Activated CD4-positive, alpha-beta memory T cell treated with anti-CD3 and anti-CD28 coated beads for 36 hours (primary cell): ENCODE measurements at regions of chrX and their contacts with region 1.

Region 1: DNA sequence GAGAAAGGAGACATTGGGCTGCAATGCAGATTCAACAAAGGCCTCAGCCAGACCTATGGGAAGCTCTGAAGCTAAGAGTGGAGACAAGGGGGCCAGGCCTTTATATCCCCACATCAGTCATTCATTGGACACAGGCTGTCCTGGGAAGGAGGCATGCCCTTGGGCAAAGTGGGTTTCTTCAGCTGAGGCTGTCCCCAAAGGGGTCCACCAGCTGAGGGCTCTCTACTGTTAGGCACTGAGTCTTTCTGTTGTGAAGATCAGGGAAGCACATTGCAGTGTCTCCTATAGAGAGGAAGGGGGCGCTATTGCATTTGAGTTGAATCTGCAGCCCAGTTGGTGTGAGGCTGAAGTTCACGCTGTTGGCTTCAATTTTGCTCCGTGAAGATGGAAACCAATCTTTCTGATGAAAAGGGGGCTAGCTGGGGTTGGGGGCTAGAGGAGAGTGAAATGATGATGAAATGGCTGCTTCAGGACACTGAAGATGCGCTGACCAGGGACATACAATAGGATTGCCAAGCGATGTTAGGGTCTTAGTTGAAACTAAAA is 48.0 kb downstream of the SLC25A5 start:
- DNase-seq: peak; percentile 27
- H3K4me3 Mint-ChIP-seq: no peak overlapping the region
- H3K27ac Mint-ChIP-seq: no peak overlapping the region
- H3K4me1 Mint-ChIP-seq: peaks cover 2% of the 10 kb centered on the region
- H3K27me3 Mint-ChIP-seq: no peaks in the 10 kb centered on the region

Region 2: GRCh38 chrX:119055687-119056086 is 460.5 kb before region 1 on chrX:
- CTCF ChIA-PET with region 1: no interaction called
- POLR2A ChIA-PET with region 1: no interaction called
- intact Hi-C with region 1: no loop called
- DNase-seq: no peak
- H3K4me3 Mint-ChIP-seq: no peak overlapping the region
- H3K27ac Mint-ChIP-seq: no peak overlapping the region
- H3K4me1 Mint-ChIP-seq: no peaks in the 10 kb centered on the region
- H3K27me3 Mint-ChIP-seq: peaks cover 1% of the 10 kb centered on the region

Region 3: GRCh38 chrX:119488749-119489148 is 27.5 kb before region 1 on chrX:
- CTCF ChIA-PET with region 1: interaction called, 7 read pairs
- POLR2A ChIA-PET with region 1: no interaction called
- intact Hi-C with region 1: loop called (anchors 1 kb)
- DNase-seq: peak; percentile 34
- H3K4me3 Mint-ChIP-seq: no peak overlapping the region
- H3K27ac Mint-ChIP-seq: no peak overlapping the region
- H3K4me1 Mint-ChIP-seq: no peaks in the 10 kb centered on the region
- H3K27me3 Mint-ChIP-seq: no peaks in the 10 kb centered on the region

Region 4: GRCh38 chrX:119729408-119730201 is 213.4 kb after region 1 on chrX:
- CTCF ChIA-PET with region 1: interaction called, 34 read pairs
- POLR2A ChIA-PET with region 1: no interaction called
- intact Hi-C with region 1: loop called (anchors 2 kb)
- DNase-seq: peak; percentile 68
- H3K4me3 Mint-ChIP-seq: no peak overlapping the region
- H3K27ac Mint-ChIP-seq: no peak overlapping the region
- H3K4me1 Mint-ChIP-seq: peaks cover 5% of the 10 kb centered on the region
- H3K27me3 Mint-ChIP-seq: no peaks in the 10 kb centered on the region

Region 5: DNA sequence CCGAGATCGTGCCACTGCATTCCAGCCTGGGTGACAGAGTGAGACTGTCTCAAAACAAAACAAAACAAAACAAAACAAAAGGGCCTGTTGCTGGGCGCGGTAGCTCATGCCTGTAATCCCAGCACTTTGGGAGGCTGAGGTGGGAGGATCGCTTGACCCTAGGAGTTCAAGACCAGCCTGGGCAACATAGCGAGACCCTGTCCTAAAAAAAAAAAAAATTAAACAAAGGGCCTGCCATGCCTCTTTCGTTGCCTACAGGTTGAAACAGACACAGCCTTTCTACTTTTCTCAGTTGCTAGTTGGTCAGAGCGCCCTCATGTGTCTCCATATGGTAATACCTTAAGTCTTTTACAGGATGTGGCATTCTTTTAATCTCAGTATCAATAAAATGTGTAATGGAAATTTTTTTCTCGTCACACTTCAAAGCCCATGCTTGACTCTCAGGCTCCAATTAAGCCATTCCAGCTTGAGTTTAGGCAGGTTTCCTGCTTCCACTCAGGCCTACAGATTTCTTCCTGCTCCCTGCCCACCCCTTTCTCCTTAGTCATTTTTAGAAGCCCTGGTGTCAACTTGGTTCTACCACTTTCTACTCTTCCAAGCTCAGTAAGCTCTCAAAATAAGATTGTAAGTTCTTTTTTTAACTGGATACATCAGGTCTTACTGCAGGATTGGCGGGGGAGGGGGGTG is 237.5 kb after region 1 on chrX:
- CTCF ChIA-PET with region 1: interaction called, 9 read pairs
- POLR2A ChIA-PET with region 1: no interaction called
- intact Hi-C with region 1: loop called (anchors 10 kb)
- DNase-seq: peak; percentile 54
- H3K4me3 Mint-ChIP-seq: peak overlapping the region; percentile 16
- H3K27ac Mint-ChIP-seq: peak overlapping the region; percentile 90
- H3K4me1 Mint-ChIP-seq: peaks cover 40% of the 10 kb centered on the region
- H3K27me3 Mint-ChIP-seq: no peaks in the 10 kb centered on the region

Region 6: GRCh38 chrX:119887721-119888425 is 371.6 kb after region 1 on chrX:
- CTCF ChIA-PET with region 1: no interaction called
- POLR2A ChIA-PET with region 1: no interaction called
- intact Hi-C with region 1: loop called (anchors 5 kb)
- DNase-seq: peak; percentile 78
- H3K4me3 Mint-ChIP-seq: peak overlapping the region; percentile 35
- H3K27ac Mint-ChIP-seq: no peak overlapping the region
- H3K4me1 Mint-ChIP-seq: peaks cover 6% of the 10 kb centered on the region
- H3K27me3 Mint-ChIP-seq: no peaks in the 10 kb centered on the region